ENCODE measurements at regions of chr9 and their contacts with region 1.

Region 1: GRCh38 chr9:95611354-95611753 is 94.6 kb upstream of the PTCH1 start:
- DNase-seq: no peak
- ATAC-seq: no peak
- H3K4me3 ChIP-seq: no peak overlapping the region
- H3K27ac ChIP-seq: no peak overlapping the region
- H3K4me1 ChIP-seq: no peaks in the 10 kb centered on the region
- H3K27me3 ChIP-seq: peaks cover 0 to 3% (median 0%) of the 10 kb centered on the region in 9 donors
- CTCF ChIP-seq: no peak
- POLR2A ChIP-seq: no peak

Region 2: GRCh38 chr9:95545831-95546567 is 65.4 kb before region 1 on chr9:
- intact Hi-C with region 1: loop called in 1 of 10 experiments (anchors 2 kb)
- DNase-seq: no peak
- ATAC-seq: no peak
- H3K4me3 ChIP-seq: no peak overlapping the region
- H3K27ac ChIP-seq: no peak overlapping the region
- H3K4me1 ChIP-seq: no peaks in the 10 kb centered on the region
- H3K27me3 ChIP-seq: peaks cover 0 to 3% (median 0%) of the 10 kb centered on the region in 9 donors
- CTCF ChIP-seq: no peak
- POLR2A ChIP-seq: no peak